Activated naive CD4-positive, alpha-beta T cell treated with anti-CD3 and anti-CD28 coated beads for 36 hours (primary cell): ENCODE measurements at regions of chr11 and their contacts with region 1.

Region 1: DNA sequence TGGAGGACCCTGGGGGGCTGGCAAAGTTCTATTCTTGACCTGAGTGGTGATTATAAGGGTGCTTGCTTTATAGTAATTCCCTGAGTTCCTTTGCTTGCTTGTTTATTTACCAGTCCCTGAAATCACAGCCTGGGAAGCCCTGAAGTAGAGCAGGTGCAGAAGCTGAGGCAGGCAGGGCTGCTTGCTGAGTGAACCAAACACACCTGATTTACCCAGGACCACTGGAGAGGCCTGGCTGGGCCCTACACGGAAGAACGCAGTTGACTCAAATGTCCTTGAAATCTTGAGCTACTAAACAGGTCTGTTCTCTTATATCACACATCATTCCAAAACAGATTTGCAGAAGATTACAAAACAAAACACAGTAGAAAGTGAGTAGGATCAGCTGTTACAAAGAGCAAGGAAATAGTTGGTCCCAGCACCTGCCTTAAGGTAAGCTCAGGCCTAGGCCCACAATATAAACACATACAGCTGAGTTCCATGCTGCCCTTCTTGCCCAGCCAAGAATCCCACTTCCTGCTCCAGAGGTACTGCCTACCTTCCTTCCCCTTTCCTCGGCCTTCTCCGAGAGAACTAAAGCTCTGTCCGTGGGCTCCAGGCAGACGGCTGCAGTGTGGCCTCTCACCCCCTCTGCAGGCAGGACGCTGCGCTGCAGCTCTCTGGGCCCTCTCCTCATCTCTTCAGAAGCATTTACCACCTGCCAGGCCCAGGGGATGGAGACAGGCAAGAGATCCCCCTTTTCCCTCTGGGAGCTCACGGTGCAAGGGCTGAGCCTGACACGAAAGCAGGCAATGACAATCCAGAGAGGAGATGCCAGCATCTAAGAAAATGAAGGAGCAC is 46.1 kb upstream of the SCUBE2 start:
- DNase-seq: peak; percentile 85
- H3K4me3 Mint-ChIP-seq: no peak overlapping the region
- H3K27ac Mint-ChIP-seq: peak overlapping the region; percentile 77
- H3K4me1 Mint-ChIP-seq: peaks cover 33% of the 10 kb centered on the region
- H3K27me3 Mint-ChIP-seq: no peaks in the 10 kb centered on the region

Region 2: GRCh38 chr11:8328848-8329330 is 808.6 kb before region 1 on chr11:
- CTCF ChIA-PET with region 1: no interaction called
- intact Hi-C with region 1: loop called (anchors 5 kb)
- DNase-seq: peak; percentile 92
- H3K4me3 Mint-ChIP-seq: no peak overlapping the region
- H3K27ac Mint-ChIP-seq: no peak overlapping the region
- H3K4me1 Mint-ChIP-seq: no peaks in the 10 kb centered on the region
- H3K27me3 Mint-ChIP-seq: peaks cover 16% of the 10 kb centered on the region

Region 3: DNA sequence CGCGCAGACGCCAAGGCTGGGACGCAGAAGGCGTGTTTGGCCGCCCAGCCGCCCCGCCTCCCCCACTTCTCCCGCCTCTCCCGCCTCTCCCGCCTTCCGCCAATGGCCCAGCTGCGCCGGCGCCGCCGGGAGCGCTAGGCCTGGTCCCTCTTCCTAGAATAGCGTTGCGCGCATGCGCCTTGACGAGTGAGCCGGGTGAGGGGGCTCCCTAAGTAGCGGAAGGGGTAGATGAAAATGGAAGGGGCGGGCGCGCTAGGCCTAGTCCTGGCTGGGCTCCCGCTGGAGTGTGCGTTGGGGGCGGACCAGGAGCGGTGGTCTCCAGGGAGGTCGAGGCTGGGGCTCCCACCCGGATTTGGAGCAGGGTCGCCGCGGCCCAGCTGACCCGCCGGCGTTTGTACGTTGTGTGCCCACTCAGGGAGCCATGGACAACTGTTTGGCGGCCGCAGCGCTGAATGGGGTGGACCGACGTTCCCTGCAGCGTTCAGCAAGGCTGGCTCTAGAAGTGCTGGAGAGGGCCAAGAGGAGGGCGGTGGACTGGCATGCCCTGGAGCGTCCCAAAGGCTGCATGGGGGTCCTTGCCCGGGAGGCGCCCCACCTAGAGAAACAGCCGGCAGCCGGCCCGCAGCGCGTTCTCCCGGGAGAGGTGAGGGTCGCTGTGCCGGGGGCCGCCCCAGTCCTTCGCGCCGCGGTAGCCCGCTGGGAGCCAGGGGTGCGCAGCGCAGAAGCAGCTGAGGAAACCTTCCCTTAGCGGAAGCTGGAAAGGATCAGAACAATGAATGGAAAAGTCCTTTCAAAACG is 226.3 kb before region 1 on chr11 and contains the start of gene AKIP1:
- CTCF ChIA-PET with region 1: interaction called, 12 read pairs
- intact Hi-C with region 1: loop called (anchors 1 kb)
- DNase-seq: peak; percentile 91
- H3K4me3 Mint-ChIP-seq: peak within 1 kb of the TSS; percentile 92
- H3K27ac Mint-ChIP-seq: peak within 1 kb of the TSS; percentile 86
- H3K4me1 Mint-ChIP-seq: peaks cover 44% of the 10 kb centered on the region
- H3K27me3 Mint-ChIP-seq: no peaks in the 10 kb centered on the region
- total RNA-seq, gene AKIP1: 41.5 to 43.9 TPM

Region 4: GRCh38 chr11:9015677-9016076 is 121.8 kb before region 1 on chr11:
- CTCF ChIA-PET with region 1: interaction called, 146 read pairs
- intact Hi-C with region 1: loop called (anchors 1 kb)
- DNase-seq: peak; percentile 73
- H3K4me3 Mint-ChIP-seq: no peak overlapping the region
- H3K27ac Mint-ChIP-seq: no peak overlapping the region
- H3K4me1 Mint-ChIP-seq: peaks cover 14% of the 10 kb centered on the region
- H3K27me3 Mint-ChIP-seq: peaks cover under 1% of the 10 kb centered on the region

Region 5: DNA sequence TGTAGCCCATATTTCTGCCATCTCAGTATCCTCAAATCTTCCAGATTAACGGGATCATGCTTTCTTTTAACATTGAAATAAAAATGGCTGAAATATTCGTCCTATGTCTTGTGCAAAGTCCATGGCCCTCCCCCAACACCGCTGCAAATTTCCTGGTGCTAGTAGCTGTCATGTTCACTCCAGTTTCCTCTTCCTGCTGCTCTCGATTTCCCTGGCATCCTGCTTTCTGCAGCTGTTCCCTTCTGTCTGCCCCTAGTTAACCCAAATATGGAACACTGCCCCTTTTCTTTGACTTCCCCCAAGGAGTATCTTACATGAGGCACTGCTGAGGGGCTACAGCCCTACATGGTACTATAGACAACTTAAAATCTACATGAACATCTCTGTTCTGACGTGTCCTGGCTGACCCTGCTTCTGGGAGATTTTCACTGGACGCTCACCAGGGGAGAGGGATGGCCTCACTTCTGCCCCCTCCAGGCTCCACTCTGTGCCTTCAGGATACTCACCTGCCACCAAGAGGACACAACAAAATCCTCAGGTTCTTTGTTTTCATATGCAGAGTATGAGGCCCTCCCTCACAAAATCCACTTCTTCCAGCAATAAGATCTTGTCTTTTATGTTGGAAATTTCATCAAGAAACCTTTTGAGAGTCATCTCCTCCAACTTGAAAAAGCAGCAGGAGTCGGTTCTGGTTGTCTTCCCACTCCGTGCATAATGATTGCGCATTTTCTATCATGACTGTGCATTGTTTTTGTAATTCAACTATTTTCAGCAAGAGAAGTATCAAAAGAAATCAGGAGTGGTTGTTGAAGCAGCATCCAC is 16.6 kb before region 1 on chr11:
- CTCF ChIA-PET with region 1: interaction called, 10 read pairs
- intact Hi-C with region 1: no loop called
- DNase-seq: no peak
- H3K4me3 Mint-ChIP-seq: no peak overlapping the region
- H3K27ac Mint-ChIP-seq: no peak overlapping the region
- H3K4me1 Mint-ChIP-seq: no peaks in the 10 kb centered on the region
- H3K27me3 Mint-ChIP-seq: no peaks in the 10 kb centered on the region

Region 6: DNA sequence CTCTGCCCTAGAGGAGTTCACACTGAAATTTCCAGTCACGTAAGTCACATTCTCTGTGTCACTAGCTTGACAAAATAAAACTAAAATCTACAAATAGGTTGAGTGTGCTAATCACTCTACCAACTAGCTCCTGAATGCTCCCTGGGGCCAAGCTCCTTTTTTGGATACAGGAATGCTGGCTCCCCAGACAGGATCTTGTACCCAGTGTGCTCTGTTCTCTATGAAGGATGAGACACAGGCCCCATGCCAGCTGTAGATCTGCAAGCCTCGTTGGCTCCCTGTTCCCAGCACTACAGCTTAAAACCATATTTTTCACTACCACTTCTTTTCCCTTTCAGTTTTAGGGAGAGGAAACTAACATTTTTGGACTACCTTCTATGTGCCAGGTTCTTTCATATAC is 243.3 kb after region 1 on chr11:
- CTCF ChIA-PET with region 1: no interaction called
- intact Hi-C with region 1: no loop called
- DNase-seq: no peak
- H3K4me3 Mint-ChIP-seq: no peak overlapping the region
- H3K27ac Mint-ChIP-seq: no peak overlapping the region
- H3K4me1 Mint-ChIP-seq: peaks cover 17% of the 10 kb centered on the region
- H3K27me3 Mint-ChIP-seq: no peaks in the 10 kb centered on the region

Region 7: GRCh38 chr11:9506489-9507276 is 369.2 kb after region 1 on chr11:
- CTCF ChIA-PET with region 1: interaction called, 14 read pairs
- intact Hi-C with region 1: no loop called
- DNase-seq: peak; percentile 90
- H3K4me3 Mint-ChIP-seq: no peak overlapping the region
- H3K27ac Mint-ChIP-seq: no peak overlapping the region
- H3K4me1 Mint-ChIP-seq: no peaks in the 10 kb centered on the region
- H3K27me3 Mint-ChIP-seq: no peaks in the 10 kb centered on the region